PC-3 (cell line): ENCODE measurements at regions of chr2 and their contacts with region 1.

Region 1: GRCh38 chr2:10302479-10303180 is at the start of gene HPCAL1:
- DNase-seq: peak; percentile 84
- ATAC-seq: peak; percentile 61
- H3K4me3 ChIP-seq: peak within 1 kb of the TSS; percentile 99
- H3K27ac ChIP-seq: peak within 1 kb of the TSS; percentile 68
- H3K4me1 ChIP-seq: peaks cover 65% of the 10 kb centered on the region
- H3K27me3 ChIP-seq: no peaks in the 10 kb centered on the region
- CTCF ChIP-seq: peak; percentile 54
- total RNA-seq, gene HPCAL1: 312 and 339 TPM in 2 replicates

Region 2: GRCh38 chr2:10141736-10142642 is 160.6 kb before region 1 on chr2:
- CTCF ChIA-PET with region 1: no interaction called
- POLR2A ChIA-PET with region 1: no interaction called
- intact Hi-C with region 1: loop called (anchors 5 kb)
- DNase-seq: peak; percentile 41
- ATAC-seq: peak; percentile 74
- H3K4me3 ChIP-seq: no peak overlapping the region
- H3K27ac ChIP-seq: no peak overlapping the region
- H3K4me1 ChIP-seq: peaks cover 4% of the 10 kb centered on the region; the same call in 1 of the 2 replicates
- H3K27me3 ChIP-seq: no peaks in the 10 kb centered on the region
- CTCF ChIP-seq: peak; percentile 71

Region 3: DNA sequence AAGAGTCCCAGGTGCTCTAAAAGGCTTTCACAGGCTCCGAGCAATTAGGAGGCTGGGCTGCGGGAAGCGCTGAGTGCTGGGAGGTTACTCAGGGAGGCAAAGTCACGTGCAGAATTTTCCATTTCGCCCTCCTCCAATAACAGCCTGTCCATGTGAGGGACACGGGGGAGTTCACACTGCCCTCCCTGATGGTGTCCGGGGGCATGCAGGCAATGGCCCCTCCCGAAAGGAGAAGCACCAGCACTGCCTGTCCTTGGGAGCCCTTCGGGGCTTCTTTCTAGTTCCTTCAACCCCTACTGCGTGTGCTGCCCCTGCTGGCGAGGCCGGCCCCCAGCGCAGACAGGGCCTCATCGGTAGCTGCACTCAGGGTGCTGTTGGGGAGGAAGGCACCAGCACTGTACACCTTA is 63.1 kb before region 1 on chr2:
- CTCF ChIA-PET with region 1: no interaction called
- POLR2A ChIA-PET with region 1: no interaction called
- intact Hi-C with region 1: no loop called
- DNase-seq: no peak
- ATAC-seq: no peak
- H3K4me3 ChIP-seq: no peak overlapping the region
- H3K27ac ChIP-seq: no peak overlapping the region
- H3K4me1 ChIP-seq: no peaks in the 10 kb centered on the region
- H3K27me3 ChIP-seq: no peaks in the 10 kb centered on the region
- CTCF ChIP-seq: no peak

Region 4: DNA sequence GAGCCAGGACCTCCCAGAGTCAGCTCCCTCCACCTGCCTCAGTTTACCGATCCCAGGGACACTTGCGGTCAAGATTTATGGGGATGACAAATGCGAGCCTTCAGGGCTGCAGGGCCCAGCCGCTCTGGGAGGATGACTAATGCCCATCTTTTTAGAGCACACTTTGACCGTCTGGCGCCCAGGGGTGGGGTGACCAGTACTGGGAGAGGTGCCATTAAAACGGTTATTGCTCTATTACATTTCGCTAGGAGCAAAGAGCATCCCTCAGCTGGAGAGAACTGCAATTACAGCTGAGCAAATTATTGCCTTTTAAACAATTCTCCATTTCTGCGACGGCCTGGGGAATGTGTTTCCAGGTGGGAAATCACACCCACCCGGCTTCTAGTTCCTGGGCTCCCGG is 42.5 kb before region 1 on chr2:
- CTCF ChIA-PET with region 1: no interaction called
- POLR2A ChIA-PET with region 1: no interaction called
- intact Hi-C with region 1: loop called (anchors 2 kb)
- DNase-seq: peak; percentile 92
- ATAC-seq: peak; percentile 96
- H3K4me3 ChIP-seq: no peak overlapping the region
- H3K27ac ChIP-seq: no peak overlapping the region
- H3K4me1 ChIP-seq: peaks cover 28% of the 10 kb centered on the region
- H3K27me3 ChIP-seq: no peaks in the 10 kb centered on the region
- CTCF ChIP-seq: peak; percentile 48

Region 5: DNA sequence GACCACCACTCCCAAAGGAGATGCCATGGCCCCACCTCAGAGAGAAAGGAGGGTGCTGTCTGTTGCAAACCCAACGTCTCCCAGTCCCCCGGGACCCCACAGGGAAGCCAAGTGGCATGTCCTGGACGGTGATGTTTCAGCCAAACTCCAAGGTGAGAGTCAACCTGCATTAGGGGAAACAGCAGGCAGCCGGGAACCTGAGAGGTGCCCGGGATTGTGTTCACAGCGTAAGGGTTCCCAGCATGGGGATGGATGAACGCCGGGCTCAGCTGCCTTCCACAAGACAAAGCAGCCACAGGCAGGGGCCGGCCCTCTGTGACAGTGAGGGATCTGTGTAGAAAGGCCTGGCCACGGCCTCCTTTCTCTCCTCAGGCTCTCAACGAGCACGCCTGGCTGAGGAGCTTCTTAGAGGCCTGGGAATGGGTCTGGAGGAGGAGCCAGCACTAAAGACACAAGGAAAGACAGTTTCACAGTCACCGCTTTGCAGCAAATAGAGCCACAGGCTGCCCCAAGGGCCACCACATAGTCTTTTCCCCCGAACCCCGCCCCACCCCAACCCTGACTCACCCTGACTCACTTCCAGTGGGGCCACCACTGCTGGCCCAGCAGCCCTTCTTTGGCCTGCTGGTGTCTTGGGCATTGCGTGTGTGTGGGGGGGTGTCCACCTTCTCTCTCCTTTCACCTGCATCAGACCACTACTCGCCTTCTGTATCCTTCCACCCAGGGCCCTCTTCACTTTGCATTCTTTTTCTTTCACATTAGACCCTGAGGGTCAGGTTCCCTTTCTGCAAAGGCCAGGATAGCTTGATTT is 19.5 kb before region 1 on chr2:
- CTCF ChIA-PET with region 1: interaction called, 6 read pairs
- POLR2A ChIA-PET with region 1: interaction called, 3 read pairs
- intact Hi-C with region 1: loop called (anchors 2 kb)
- DNase-seq: peak; percentile 98
- ATAC-seq: peak; percentile 77
- H3K4me3 ChIP-seq: no peak overlapping the region
- H3K27ac ChIP-seq: peak overlapping the region; percentile 95
- H3K4me1 ChIP-seq: peaks cover 60% of the 10 kb centered on the region
- H3K27me3 ChIP-seq: no peaks in the 10 kb centered on the region
- CTCF ChIP-seq: no peak

Region 6: DNA sequence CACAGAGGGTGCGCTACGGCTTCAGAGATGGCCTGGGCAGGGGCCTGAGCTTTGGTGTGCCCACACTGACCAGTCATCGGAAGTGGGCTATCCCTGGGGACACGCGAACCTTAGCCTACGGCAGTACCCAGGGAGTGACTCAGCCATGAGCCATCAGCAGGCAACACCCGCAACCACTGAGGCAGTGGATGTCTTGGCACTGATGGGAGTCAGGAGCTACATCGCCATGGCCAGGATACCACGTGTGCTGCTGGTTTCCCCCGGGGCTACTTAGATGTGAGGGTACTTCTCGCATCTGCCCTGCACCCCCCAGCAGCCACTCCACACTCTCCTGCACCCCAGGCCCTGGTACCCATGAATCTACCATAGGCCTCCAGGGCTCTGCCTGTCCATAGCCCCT is 12.7 kb before region 1 on chr2:
- CTCF ChIA-PET with region 1: interaction called, 13 read pairs
- POLR2A ChIA-PET with region 1: no interaction called
- intact Hi-C with region 1: no loop called
- DNase-seq: peak; percentile 98
- ATAC-seq: peak; percentile 54
- H3K4me3 ChIP-seq: no peak overlapping the region
- H3K27ac ChIP-seq: peak overlapping the region; percentile 89
- H3K4me1 ChIP-seq: peaks cover 58% of the 10 kb centered on the region
- H3K27me3 ChIP-seq: no peaks in the 10 kb centered on the region
- CTCF ChIP-seq: no peak

Region 7: GRCh38 chr2:11118761-11119160 is 816.1 kb after region 1 on chr2:
- CTCF ChIA-PET with region 1: no interaction called
- POLR2A ChIA-PET with region 1: no interaction called
- intact Hi-C with region 1: no loop called
- DNase-seq: no peak
- ATAC-seq: no peak
- H3K4me3 ChIP-seq: no peak overlapping the region
- H3K27ac ChIP-seq: no peak overlapping the region
- H3K4me1 ChIP-seq: peaks cover 4% of the 10 kb centered on the region; the same call in 1 of the 2 replicates
- H3K27me3 ChIP-seq: no peaks in the 10 kb centered on the region
- CTCF ChIP-seq: no peak